Activated CD4-positive, alpha-beta memory T cell treated with anti-CD3 and anti-CD28 coated beads, Interleukin-2, amount 10 ng/mL, durations not matched to agents 7 days and 5 days (primary cell): ENCODE measurements at regions of chr10 and their contacts with region 1.

Region 1: GRCh38 chr10:70221030-70221429 is 12.2 kb downstream of the PPA1 start:
- DNase-seq: no peak
- H3K4me3 Mint-ChIP-seq: peak overlapping the region; percentile 53
- H3K27ac Mint-ChIP-seq: peak overlapping the region; percentile 73
- H3K4me1 Mint-ChIP-seq: peaks cover 37% of the 10 kb centered on the region
- H3K27me3 Mint-ChIP-seq: no peaks in the 10 kb centered on the region

Region 2: DNA sequence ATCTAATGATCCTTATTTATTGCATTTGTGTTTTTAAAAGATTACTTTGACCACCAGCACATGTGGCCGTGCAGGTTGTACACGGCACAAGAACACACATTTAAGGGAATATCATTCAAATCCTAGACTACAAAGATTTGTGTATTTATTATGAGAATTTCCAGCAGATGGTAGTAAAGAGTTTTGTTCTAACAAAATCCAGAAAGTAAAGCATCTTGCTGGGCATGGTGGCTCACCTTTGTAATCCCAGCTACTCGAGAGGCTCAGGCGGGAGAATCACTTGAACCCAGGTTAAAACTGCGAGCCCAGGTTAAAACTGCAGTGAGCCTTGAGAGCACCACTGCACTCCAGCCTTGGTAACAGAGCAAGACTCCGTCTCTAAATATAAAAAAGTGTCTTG is 136.8 kb before region 1 on chr10:
- CTCF ChIA-PET with region 1: no interaction called
- POLR2A ChIA-PET with region 1: no interaction called
- DNase-seq: no peak
- H3K4me3 Mint-ChIP-seq: no peak overlapping the region
- H3K27ac Mint-ChIP-seq: no peak overlapping the region
- H3K4me1 Mint-ChIP-seq: no peaks in the 10 kb centered on the region
- H3K27me3 Mint-ChIP-seq: peaks cover 8% of the 10 kb centered on the region

Region 3: GRCh38 chr10:70115948-70116682 is 104.9 kb before region 1 on chr10:
- CTCF ChIA-PET with region 1: interaction called, 16 read pairs
- POLR2A ChIA-PET with region 1: no interaction called
- DNase-seq: peak; percentile 56
- H3K4me3 Mint-ChIP-seq: no peak overlapping the region
- H3K27ac Mint-ChIP-seq: no peak overlapping the region
- H3K4me1 Mint-ChIP-seq: peaks cover 3% of the 10 kb centered on the region
- H3K27me3 Mint-ChIP-seq: no peaks in the 10 kb centered on the region

Region 4: DNA sequence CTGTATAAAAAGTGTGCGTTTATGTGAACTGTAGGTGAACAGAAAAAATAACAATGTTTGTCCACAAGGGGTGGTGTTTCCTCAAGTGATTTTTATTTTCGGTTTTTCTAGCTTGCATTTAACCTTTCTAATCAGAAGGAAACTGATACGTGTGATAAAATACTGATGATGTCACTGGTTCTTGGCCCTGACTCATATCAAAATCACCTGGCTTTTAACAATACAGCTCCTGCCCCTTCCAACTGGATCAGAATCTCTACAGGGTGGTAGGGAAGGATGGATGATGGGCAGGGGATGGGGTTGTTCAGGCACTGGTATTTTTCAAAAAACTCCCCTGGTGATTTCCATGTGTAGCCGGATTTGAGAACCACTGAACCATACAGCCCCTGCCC is 51.9 kb after region 1 on chr10:
- CTCF ChIA-PET with region 1: interaction called, 13 read pairs
- POLR2A ChIA-PET with region 1: no interaction called
- DNase-seq: no peak
- H3K4me3 Mint-ChIP-seq: no peak overlapping the region
- H3K27ac Mint-ChIP-seq: no peak overlapping the region
- H3K4me1 Mint-ChIP-seq: peaks cover 26% of the 10 kb centered on the region
- H3K27me3 Mint-ChIP-seq: peaks cover 2% of the 10 kb centered on the region

Region 5: DNA sequence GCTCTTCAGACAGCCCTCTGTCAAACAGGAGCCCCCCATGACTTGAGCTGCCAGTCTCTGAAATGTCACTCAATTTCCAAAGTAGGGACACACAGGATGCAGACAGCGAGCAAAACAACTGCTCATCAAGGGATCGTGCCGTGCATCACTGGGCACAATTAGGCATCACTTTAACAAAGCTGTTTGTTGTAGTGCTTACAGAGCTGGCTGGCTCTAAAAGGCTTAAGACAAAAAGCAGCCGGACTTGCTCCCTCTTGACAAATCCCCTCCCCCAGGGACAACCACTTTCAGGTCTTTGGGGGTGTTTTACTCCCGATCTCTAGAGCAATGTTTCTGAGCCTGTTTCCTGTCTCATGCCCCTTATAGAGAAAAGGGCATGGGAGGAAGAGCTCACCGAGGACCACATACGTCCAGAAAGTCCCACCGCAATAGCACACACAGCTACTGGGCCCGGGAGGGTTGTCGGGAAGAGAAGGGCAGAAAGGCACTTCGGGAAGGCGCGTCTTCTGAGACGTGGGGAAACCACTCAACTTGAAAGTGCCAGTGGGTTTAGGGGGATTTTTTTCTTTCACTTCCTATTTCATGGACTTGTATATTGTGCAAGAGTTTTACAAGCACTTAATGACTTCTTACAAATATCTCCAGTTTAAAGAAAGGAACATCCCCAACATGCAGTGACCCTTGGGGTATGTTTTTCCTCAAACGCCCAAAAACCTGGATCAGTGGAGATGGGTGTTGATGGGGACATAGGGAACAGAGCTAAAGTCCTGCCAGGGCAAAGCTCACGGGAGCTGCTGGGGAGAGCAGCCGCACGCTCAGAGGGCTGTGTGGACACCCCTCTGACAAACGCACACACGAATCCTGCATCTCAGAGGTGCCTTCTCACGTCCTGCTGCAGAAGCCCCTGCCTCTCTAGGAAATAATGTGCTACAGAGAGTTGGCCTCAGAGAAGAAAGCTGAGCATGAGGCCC is 134.3 kb after region 1 on chr10:
- CTCF ChIA-PET with region 1: interaction called, 313 read pairs
- POLR2A ChIA-PET with region 1: interaction called, 3 read pairs
- DNase-seq: no peak
- H3K4me3 Mint-ChIP-seq: peak overlapping the region; percentile 44
- H3K27ac Mint-ChIP-seq: peak overlapping the region; percentile 69
- H3K4me1 Mint-ChIP-seq: peaks cover 35% of the 10 kb centered on the region
- H3K27me3 Mint-ChIP-seq: no peaks in the 10 kb centered on the region

Region 6: GRCh38 chr10:70381471-70382421 is 160.7 kb after region 1 on chr10:
- CTCF ChIA-PET with region 1: interaction called, 10 read pairs
- POLR2A ChIA-PET with region 1: interaction called, 3 read pairs
- DNase-seq: peak; percentile 51
- H3K4me3 Mint-ChIP-seq: peak overlapping the region; percentile 83
- H3K27ac Mint-ChIP-seq: no peak overlapping the region
- H3K4me1 Mint-ChIP-seq: peaks cover 16% of the 10 kb centered on the region
- H3K27me3 Mint-ChIP-seq: no peaks in the 10 kb centered on the region